KBM-7 (cell line): ENCODE measurements at regions of chr20 and their contacts with region 1.

Region 1: GRCh38 chr20:48523212-48523941 is 304.4 kb downstream of the PREX1 start:
- DNase-seq: peak; percentile 31

Region 2: GRCh38 chr20:47886460-47887041 is 636.8 kb before region 1 on chr20:
- in situ Hi-C with region 1: loop called (anchors 10 kb)
- DNase-seq: no peak